ENCODE measurements at regions of chr1 and their contacts with region 1.

Region 1: GRCh38 chr1:67570473-67571143 is 114.4 kb upstream of the GADD45A start:
- DNase-seq: no peak
- ATAC-seq: peak in 1 of 2 donors; percentile 7
- H3K4me3 ChIP-seq: no peak overlapping the region
- H3K27ac ChIP-seq: peak overlapping the region; percentile 90 to 96 (median 92)
- H3K4me1 ChIP-seq: peaks cover 27 to 44% of the 10 kb centered on the region in 2 donors
- H3K27me3 ChIP-seq: no peaks in the 10 kb centered on the region
- CTCF ChIP-seq: no peak
- POLR2A ChIP-seq: no peak

Region 2: DNA sequence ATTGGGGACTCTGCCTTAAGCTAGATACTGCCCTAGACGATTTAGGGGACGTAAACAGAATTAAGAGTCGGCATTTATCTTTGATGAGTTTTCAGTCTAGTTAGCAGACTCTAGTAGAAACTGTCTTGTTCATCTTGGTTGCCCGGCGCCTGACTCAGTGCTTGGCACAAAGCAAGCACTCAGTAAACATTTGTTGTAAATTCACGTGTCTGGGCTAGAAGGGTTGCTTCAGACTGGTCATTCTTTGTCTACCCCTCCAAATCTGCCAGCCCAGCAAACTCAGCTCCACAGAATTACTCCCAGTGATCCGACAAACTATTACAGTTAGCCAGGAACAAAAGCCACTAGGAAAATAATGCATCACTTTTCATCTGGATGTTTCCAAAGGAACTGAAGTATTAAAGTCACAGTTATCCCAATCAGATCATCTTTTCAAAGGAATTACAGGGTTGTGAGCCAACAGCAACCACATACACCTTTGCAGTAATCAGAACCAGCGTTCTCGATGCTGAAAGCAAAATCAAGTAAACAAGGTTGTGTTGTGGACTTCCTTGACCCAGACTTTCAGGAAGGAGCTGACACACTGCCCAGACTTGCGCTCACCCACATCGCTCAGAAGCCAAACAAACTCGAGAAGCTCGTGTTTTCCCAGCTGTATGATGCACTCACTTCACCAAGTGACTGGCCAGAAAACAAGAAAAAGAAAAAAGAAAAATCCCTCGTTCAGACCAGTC is 47.8 kb after region 1 on chr1:
- in situ Hi-C with region 1: no loop called
- intact Hi-C with region 1: loop called (anchors 2 kb)
- DNase-seq: peak; percentile 63 to 74
- ATAC-seq: peak; percentile 77 to 83
- H3K4me3 ChIP-seq: peak overlapping the region in 2 of 4 donors; percentile 16 to 18
- H3K27ac ChIP-seq: peak overlapping the region; percentile 53 to 84 (median 74)
- H3K4me1 ChIP-seq: peaks cover 25 to 30% of the 10 kb centered on the region in 2 donors
- H3K27me3 ChIP-seq: no peaks in the 10 kb centered on the region
- CTCF ChIP-seq: no peak
- POLR2A ChIP-seq: no peak